ENCODE measurements at regions of chr5 and their contacts with region 1.

Region 1: DNA sequence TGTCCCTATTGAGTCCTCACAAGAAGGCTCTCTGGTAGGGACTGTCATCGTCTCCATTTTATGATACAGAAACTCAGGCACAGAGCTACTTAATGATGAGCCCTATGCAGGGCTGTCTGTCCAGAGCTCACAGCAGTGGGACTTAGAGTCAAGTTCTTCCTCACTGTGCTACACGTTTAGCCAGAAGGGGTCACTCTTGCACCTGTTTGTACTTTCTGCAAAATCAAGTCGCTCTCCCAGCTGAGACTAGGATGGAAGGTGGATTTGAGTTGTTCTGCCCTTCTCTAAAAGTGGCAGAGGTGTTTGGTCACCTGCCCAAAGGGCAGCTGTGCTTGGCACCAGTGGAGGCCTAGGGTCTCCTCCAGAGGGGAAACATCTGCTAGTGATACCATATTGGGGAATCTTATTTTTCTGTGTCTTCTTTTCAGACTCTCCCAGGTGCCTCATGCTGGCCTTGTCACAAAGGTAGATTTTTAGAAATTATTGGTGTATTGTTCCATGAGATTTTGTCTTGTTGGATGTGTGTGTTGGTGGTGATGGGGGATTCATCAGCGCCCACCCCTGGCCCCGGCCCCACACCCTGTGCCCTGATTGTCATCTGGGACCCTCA is 104.2 kb downstream of the PPARGC1B start:
- DNase-seq: peak; percentile 49
- H3K4me3 ChIP-seq: no peak overlapping the region
- CTCF ChIP-seq: peak; percentile 78

Region 2: DNA sequence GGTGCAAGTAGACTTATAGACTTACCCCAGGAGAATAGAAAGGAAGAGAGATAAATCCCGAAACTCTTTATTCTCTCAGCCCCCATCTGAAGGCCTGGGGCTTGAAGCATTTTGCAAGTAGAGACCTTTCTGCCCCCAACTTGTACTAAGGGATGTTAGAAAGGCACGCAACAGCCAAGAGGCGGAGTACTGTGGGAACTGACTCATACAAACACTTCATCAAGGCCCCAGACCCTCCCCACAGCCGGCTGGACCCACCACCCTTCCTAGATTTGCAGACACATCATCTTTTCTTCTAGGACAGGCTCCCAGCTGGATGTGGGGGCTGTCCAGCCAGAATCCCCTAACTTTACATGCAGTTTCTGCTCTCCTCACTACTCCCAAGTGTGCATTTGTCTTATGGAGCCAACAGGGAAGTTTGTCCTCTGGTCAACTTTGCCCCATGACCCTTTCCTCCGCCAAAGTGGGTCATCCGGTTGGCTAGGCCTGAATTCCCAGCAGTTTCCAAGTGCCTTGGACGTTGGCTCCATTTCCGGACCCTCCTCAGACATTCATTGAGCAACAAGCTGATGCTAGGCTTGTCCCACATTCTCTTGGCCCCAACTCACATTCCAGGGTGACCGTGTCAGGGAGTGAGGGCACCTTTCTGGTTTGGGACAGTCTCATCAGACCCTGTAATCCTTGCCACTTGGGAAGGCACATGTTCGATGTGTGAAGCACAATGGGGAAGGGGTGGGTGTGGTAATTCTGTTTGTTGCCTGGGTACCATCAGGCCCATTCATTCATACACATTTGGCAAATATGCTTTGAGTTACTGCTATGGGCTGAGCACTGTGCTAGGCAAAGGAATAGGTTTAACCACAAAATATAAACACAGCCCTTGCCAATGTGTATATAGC is 628.5 kb before region 1 on chr5:
- CTCF ChIA-PET with region 1: no interaction called
- POLR2A ChIA-PET with region 1: no interaction called
- DNase-seq: no peak
- H3K4me3 ChIP-seq: no peak overlapping the region
- CTCF ChIP-seq: no peak

Region 3: DNA sequence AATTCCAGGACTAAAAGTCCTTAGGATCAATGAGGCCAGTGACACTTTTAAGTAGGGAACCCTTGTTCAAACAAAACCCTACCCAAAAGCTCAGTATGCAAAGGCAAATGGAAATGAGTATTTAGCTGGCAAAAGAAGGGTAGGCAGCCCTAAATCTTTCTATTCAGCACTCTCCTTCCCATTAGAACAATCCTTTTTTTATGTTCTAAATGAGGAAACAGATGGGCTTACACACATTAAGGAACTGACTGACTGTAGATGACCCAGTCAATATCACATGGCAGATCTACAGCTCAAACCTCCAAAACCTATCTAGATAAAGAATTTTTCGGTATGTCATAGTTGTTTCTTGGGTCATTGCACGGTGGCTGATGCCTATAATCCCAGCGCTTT is 290.3 kb before region 1 on chr5:
- CTCF ChIA-PET with region 1: no interaction called
- POLR2A ChIA-PET with region 1: no interaction called
- DNase-seq: no peak
- H3K4me3 ChIP-seq: no peak overlapping the region
- CTCF ChIP-seq: no peak

Region 4: GRCh38 chr5:149667084-149667828 is 167.1 kb before region 1 on chr5:
- CTCF ChIA-PET with region 1: interaction called, 106 read pairs
- POLR2A ChIA-PET with region 1: no interaction called
- DNase-seq: no peak
- H3K4me3 ChIP-seq: no peak overlapping the region
- CTCF ChIP-seq: peak; percentile 54

Region 5: DNA sequence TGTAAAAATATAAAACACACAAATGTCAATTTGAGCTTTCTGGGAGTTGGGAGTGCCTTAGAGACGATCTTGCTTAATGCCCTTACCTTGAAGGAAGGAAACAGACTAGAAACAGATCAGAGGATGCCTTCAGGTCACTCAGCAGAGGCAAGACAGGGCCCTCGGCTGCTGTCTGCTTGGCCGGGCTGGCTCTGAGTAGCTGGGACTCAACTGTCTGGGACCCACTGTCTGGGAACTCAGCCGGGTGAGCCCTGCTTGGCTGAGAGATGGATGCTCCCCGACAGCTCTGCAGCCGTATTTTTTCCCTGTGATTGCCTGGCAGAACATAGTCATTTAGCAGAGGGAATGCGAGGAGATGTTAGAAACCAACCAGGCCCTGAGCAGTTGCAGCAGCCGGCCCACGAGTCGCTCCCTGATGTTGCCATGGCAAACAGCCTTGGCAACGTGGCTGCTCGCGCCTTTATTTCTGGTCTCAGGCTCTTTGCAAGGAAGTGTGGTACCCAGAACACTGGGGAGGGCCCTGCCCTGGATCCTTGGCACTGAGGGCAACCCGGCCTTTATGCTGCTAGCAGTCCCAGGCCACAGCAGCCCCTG is 93.4 kb before region 1 on chr5:
- CTCF ChIA-PET with region 1: no interaction called
- POLR2A ChIA-PET with region 1: no interaction called
- DNase-seq: no peak
- H3K4me3 ChIP-seq: no peak overlapping the region
- CTCF ChIP-seq: no peak

Region 6: GRCh38 chr5:149935431-149935901 is 101.1 kb after region 1 on chr5:
- CTCF ChIA-PET with region 1: interaction called, 11 read pairs
- POLR2A ChIA-PET with region 1: no interaction called
- DNase-seq: no peak
- H3K4me3 ChIP-seq: no peak overlapping the region
- CTCF ChIP-seq: no peak

Region 7: DNA sequence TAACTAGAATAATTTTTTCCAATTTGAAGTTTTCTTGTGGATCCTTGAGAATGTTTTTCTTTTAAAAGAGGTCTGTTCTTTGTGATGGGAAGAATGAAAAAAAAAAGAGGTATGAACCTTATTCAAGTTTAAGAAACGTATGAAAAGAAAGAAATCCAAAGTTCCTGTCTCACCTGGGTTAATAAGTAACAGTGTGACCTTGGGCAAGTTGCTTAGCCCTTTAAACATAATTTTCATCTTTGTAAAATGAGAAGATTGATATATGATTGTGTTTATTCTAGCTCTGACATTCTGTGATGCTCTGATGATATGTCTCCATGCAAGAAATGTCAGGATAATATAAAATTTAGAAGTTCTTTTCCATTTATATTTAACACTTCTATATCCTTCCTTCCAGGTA is 145.5 kb after region 1 on chr5:
- CTCF ChIA-PET with region 1: interaction called, 74 read pairs
- POLR2A ChIA-PET with region 1: no interaction called
- DNase-seq: no peak
- H3K4me3 ChIP-seq: no peak overlapping the region
- CTCF ChIP-seq: no peak

Region 8: DNA sequence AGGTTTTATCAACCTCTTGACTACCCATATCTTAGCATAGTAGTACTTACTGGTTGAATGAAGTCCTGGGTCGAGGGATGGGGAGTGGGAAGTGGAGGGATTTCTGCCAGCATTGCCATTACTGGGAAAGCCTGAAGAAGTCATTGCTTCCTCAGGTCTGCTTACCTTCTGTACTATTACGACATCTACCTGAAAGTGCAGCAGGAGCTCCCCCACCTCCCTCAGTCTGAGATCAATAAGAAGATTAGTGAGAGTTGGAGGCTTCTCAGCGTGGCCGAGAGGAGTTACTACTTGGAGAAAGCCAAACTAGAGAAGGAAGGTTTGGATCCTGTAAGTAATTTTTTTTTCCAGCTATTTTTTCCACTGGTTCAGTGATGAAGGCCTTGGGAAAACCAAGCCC is 172.0 kb after region 1 on chr5:
- CTCF ChIA-PET with region 1: interaction called, 48 read pairs
- POLR2A ChIA-PET with region 1: no interaction called
- DNase-seq: no peak
- H3K4me3 ChIP-seq: no peak overlapping the region
- CTCF ChIP-seq: no peak

Region 9: DNA sequence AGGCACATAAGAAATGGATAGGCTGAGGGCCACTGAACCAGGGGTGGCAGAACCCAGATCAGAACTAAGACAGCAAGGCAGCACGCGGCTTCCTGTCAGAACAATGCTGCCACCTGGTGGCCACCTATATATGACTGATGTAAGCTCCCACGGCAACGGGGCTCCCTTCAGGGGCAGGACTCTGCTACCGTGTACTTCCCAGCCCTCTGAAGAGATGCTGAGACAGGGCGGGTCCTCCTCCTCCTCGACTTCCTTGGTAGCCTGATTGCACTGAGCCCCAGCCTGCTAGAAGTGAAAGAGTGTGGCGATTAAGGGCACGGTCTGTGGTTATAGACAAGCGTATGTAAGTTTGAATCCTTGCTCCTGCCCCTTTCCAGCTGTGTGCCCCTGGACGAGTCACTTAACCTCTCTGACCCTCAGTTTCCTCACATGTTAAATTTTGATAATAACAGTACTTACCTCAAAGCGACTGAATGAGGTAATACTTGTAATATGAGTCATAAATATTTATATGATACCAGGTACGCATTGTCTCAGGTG is 601.9 kb after region 1 on chr5:
- CTCF ChIA-PET with region 1: interaction called, 17 read pairs
- POLR2A ChIA-PET with region 1: no interaction called
- DNase-seq: peak; percentile 14
- H3K4me3 ChIP-seq: no peak overlapping the region
- CTCF ChIP-seq: peak; percentile 83

Measured in AG04449 (cell line).